Activated naive CD8-positive, alpha-beta T cell treated with anti-CD3 and anti-CD28 coated beads, Interleukin-2, amount 10 ng/mL, durations not matched to agents 7 days and 5 days (primary cell): ENCODE measurements at regions of chr15 and their contacts with region 1.

Region 1: GRCh38 chr15:40307421-40308211 is at the start of gene PLCB2:
- DNase-seq: peak; percentile 79
- ATAC-seq: peak; percentile 75
- H3K4me3 Mint-ChIP-seq: peak within 1 kb of the TSS; percentile 98
- H3K27ac Mint-ChIP-seq: peak within 1 kb of the TSS; percentile 98
- H3K4me1 Mint-ChIP-seq: peaks cover 24% of the 10 kb centered on the region
- H3K27me3 Mint-ChIP-seq: peaks cover 11% of the 10 kb centered on the region
- total RNA-seq, gene PLCB2: 173 to 174 TPM

Region 2: GRCh38 chr15:40038638-40039543 is 268.7 kb before region 1 on chr15 and contains the start of gene SRP14:
- POLR2A ChIA-PET with region 1: interaction called, 13 read pairs
- DNase-seq: peak; percentile 88
- ATAC-seq: peak; percentile 96
- H3K4me3 Mint-ChIP-seq: peak within 1 kb of the TSS; percentile 99
- H3K27ac Mint-ChIP-seq: peak within 1 kb of the TSS; percentile 98
- H3K4me1 Mint-ChIP-seq: peaks cover 40% of the 10 kb centered on the region
- H3K27me3 Mint-ChIP-seq: no peaks in the 10 kb centered on the region
- total RNA-seq, gene SRP14: 155 to 170 TPM

Region 3: GRCh38 chr15:40249482-40250303 is 57.9 kb before region 1 on chr15:
- POLR2A ChIA-PET with region 1: no interaction called
- DNase-seq: no peak
- ATAC-seq: no peak
- H3K4me3 Mint-ChIP-seq: no peak overlapping the region
- H3K27ac Mint-ChIP-seq: no peak overlapping the region
- H3K4me1 Mint-ChIP-seq: peaks cover 9% of the 10 kb centered on the region
- H3K27me3 Mint-ChIP-seq: peaks cover 35% of the 10 kb centered on the region

Region 4: DNA sequence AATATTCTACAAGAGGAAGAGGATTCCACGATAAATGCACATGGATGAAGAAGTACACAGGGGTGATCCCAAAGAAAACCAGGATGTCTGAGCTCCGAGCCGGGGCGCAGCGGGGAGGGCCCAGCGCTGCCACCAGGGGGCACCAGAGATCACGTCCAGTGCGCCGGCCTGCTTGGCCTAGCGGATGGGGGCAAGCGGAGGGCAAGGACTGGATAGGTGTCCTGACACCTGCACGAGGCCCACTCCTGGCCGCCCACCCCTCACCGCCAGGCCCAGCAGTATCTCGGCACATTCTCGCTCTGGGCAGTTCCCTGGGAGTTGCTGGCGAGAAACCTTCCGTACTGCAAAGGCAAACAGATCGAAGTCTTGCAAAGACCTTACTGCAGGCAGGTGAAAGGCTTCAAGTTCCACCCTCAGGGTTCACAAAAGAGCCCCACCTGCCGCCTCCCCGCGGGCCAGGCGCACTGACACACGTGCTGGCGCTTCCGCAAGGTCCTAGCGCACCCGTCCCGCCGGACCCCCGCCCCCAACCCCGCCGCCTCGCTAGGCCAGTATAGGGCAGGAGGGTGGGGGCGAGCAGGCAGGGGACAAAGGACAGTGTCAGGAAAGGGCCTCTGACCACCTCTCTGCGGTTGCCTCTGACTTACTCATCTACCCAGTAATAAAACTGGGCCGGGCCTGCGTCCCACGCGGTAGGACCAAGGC is 28.0 kb before region 1 on chr15:
- POLR2A ChIA-PET with region 1: interaction called, 55 read pairs
- DNase-seq: peak; percentile 85
- ATAC-seq: peak; percentile 25
- H3K4me3 Mint-ChIP-seq: no peak overlapping the region
- H3K27ac Mint-ChIP-seq: no peak overlapping the region
- H3K4me1 Mint-ChIP-seq: peaks cover 6% of the 10 kb centered on the region
- H3K27me3 Mint-ChIP-seq: peaks cover 54% of the 10 kb centered on the region

Region 5: GRCh38 chr15:40290918-40291574 is 16.6 kb before region 1 on chr15:
- POLR2A ChIA-PET with region 1: interaction called, 39 read pairs
- DNase-seq: no peak
- ATAC-seq: no peak
- H3K4me3 Mint-ChIP-seq: no peak overlapping the region
- H3K27ac Mint-ChIP-seq: no peak overlapping the region
- H3K4me1 Mint-ChIP-seq: no peaks in the 10 kb centered on the region
- H3K27me3 Mint-ChIP-seq: no peaks in the 10 kb centered on the region

Region 6: GRCh38 chr15:40323239-40323952 is 15.8 kb after region 1 on chr15 and contains the start of gene INAFM2:
- POLR2A ChIA-PET with region 1: interaction called, 38 read pairs
- DNase-seq: peak; percentile 93
- ATAC-seq: peak; percentile 96
- H3K4me3 Mint-ChIP-seq: peak within 1 kb of the TSS; percentile 81
- H3K27ac Mint-ChIP-seq: no peak within 1 kb of the TSS
- H3K4me1 Mint-ChIP-seq: peaks cover 29% of the 10 kb centered on the region
- H3K27me3 Mint-ChIP-seq: peaks cover 15% of the 10 kb centered on the region
- total RNA-seq, gene INAFM2: 8.8 to 9.4 TPM